ENCODE measurements at regions of chr15 and their contacts with region 1.

Region 1: DNA sequence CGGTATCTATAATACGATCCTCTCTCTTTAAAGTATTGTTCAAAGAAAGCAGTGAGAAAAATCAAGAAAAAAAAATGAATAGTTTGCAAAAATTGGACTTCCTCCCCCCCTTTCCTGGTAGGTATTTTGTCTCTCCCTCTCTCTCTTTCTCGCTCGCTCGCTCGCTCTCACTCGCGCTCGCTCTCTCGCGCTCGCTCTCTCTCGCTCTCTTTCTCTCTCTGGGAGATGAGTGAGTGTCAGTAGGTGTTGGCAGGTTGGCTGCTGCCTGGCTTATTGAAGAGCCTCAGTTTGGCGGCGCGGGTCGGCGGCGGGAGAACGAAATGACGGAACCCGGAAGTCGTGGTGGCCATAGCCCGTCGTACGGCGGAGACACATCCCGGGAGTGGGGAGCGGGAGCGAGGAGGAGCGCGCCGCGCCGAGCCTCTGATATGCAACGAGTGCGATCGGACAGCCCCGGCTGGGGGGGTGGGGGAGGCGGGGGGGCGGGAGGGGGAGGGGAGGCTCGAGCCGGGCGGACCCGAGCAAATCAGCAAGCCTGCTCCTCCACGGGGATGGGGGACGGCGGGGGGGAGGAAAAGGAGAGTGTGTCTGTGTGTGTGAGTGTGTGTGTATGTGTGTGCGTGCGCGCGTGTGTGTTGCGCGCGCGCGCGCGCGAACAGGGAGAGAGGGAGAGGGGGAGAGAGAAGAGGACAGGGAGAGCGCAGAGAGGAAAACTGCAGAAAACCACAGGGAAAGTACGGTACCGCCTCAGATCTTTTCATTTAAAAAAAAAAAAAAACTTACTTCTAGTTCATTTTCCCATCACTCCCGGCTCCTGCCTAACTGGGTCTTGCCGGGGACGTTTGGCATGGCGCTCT is at the start of gene MEIS2:
- DNase-seq: peak; percentile 97
- ATAC-seq: peak; percentile 71
- total RNA-seq, gene MEIS2: 43.9 TPM

Region 2: GRCh38 chr15:36544518-36545466 is 555.5 kb before region 1 on chr15:
- intact Hi-C with region 1: no loop called
- DNase-seq: no peak
- ATAC-seq: peak; percentile 75

Region 3: DNA sequence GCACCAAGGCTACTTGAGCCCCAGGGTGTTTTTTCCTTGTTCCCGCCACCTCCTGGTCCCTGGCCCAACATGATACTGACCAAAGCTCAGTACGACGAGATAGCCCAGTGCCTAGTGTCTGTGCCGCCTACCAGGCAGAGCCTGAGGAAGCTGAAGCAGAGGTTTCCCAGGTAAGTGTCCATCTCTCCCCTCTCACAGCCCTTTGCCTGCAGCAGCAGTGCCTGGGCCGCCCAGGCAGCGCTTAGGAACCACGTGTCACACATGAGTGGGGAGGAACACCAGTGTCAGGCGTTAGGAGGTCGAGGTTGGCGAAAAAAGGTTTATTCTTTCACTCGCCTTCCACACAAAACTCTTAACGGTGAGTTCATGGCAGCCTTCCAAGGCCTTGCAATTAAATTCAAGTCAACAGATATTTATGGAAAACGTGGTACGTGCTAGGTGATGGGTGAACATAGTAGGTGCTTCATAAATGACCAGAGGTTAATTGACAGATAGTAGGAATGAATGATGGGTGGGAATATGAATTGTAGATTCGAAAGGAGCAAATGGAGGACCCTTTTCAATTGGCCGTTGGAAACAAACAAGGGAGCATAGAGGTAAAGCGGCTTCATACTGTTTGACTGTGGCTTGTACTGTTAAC is 520.4 kb before region 1 on chr15:
- intact Hi-C with region 1: loop called (anchors 10 kb)
- DNase-seq: no peak
- ATAC-seq: peak; percentile 38

Region 4: GRCh38 chr15:36883713-36884517 is 216.4 kb before region 1 on chr15:
- intact Hi-C with region 1: loop called (anchors 5 kb)
- DNase-seq: peak; percentile 92
- ATAC-seq: peak; percentile 92

Region 5: DNA sequence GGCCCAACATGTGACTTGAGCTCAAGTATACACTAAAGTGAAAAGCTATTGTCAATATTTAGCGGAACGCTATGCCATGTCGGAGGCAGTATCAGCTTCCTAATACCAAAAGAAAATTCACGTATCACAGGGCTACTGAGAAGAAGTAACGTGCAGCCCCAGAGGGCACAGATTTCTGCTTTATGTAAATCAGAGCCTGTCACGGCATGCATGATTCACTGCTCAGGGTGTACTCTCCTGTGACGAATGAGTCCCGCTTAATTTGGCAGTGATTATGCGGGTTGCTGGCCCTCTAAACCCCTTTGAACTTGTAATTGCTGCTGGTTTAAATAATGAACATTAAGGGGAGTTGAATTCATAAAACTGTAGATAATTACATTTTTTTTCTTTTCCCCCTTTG is 85.3 kb before region 1 on chr15:
- intact Hi-C with region 1: no loop called
- DNase-seq: no peak
- ATAC-seq: peak; percentile 77